AG04449 (cell line): ENCODE measurements at regions of chr17 and their contacts with region 1.

Region 1: GRCh38 chr17:29533976-29534375 is 32.9 kb downstream of the ABHD15 start:
- DNase-seq: no peak
- H3K4me3 ChIP-seq: no peak overlapping the region
- CTCF ChIP-seq: no peak

Region 2: GRCh38 chr17:29412780-29413565 is 121.0 kb before region 1 on chr17:
- CTCF ChIA-PET with region 1: no interaction called
- POLR2A ChIA-PET with region 1: no interaction called
- DNase-seq: peak; percentile 52
- H3K4me3 ChIP-seq: no peak overlapping the region
- CTCF ChIP-seq: no peak

Region 3: DNA sequence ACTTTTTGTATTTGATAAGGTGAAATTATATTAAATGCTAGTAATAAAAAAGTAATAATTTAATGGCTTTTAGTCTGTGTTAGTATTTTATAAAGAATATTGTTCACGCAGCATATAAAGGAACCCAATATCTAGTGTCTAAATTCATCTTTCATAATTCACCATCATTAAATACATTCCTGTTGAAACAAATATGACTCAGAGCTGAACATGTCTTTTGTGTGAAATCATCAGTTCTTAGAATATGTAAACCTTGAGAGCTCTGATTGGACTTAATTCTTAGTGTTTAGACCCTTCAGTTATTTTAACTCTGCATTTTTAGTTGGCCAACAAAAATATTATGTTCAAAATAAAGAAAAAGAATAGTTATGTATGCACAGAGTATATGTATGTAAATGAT is 39.0 kb before region 1 on chr17:
- CTCF ChIA-PET with region 1: interaction called, 13 read pairs
- POLR2A ChIA-PET with region 1: no interaction called
- DNase-seq: peak; percentile 17
- H3K4me3 ChIP-seq: no peak overlapping the region
- CTCF ChIP-seq: no peak

Region 4: GRCh38 chr17:29514792-29515191 is 19.2 kb before region 1 on chr17:
- CTCF ChIA-PET with region 1: interaction called, 64 read pairs
- POLR2A ChIA-PET with region 1: no interaction called
- DNase-seq: no peak
- H3K4me3 ChIP-seq: no peak overlapping the region
- CTCF ChIP-seq: no peak

Region 5: DNA sequence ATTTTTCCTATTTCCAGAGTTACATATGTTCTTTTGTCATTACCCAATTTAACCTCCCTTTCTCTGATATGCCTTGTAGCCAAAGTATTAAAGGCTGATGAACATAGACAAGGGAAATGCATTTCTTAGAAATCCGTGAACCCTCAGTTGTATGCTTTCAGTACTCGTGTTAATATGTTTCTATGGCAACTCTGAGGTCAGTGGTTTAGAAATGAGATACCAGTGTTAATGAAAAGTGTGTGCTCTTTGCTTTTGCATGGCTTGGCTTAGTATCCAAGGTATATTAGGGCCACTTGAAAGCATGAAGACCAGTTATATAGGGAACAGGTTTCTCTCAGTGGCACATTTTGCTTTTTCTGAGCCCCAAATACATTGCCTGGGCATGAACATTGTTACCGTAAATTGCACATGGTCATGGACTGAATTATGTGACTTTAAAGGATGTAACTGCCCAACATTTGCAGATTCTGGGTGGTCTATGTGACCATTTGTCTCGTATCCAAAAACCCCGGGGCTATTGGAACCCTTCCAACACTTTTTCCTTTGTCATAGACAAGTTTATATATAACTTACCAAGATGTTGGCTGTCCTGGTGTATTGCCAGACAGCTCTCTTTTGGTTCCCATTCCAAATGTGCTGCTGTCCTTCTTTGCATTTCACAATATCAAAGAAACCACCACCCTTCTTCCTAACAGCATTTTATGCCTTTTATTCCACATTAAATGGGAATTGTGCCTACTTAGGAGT is 15.4 kb after region 1 on chr17:
- CTCF ChIA-PET with region 1: interaction called, 20 read pairs
- POLR2A ChIA-PET with region 1: no interaction called
- DNase-seq: no peak
- H3K4me3 ChIP-seq: no peak overlapping the region
- CTCF ChIP-seq: no peak

Region 6: DNA sequence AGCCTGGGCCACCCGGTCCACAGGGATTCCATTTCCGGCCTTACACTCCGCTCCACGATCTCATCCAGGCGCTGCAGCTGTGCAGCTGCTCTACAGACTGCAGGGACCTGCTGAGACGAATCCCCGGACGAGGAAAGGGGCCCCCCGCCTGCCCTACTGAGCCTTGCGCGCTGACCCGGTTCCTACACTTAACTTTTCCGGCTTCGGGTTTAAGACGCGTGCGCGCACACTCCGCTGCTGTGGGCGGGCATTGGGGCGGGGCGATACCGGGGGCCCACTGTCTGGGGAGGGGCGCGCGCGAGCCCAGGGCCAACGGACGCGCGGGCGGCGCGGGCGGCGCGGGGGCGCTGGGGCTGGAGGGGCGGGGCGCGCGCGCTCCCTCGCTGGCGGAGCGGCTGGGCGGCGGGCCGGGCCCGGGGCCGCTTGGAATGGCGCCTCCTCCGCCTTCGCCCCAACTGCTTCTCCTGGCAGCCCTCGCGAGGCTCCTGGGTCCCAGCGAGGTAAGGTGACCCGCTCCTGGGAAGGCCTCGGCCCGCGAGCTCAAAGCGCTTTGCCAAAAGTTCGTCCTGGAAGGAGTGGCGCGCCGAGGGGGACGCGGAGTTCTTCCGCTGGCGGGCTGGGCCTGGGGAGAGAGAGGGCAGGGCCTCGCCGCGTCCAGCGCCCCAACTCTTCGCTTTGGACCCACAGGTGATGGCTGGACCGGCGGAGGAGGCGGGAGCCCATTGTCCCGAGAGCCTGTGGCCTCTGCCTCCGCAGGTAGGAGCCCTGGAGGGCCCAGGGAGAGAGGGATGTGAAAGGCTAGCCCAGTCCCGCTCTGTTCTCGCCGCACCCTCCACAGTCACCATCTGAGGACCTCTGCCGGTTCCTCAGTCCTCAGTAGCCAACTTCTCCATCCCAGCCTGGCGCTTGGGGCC is 34.6 kb after region 1 on chr17 and contains the start of gene TP53I13:
- CTCF ChIA-PET with region 1: interaction called, 11 read pairs
- POLR2A ChIA-PET with region 1: no interaction called
- DNase-seq: no peak
- H3K4me3 ChIP-seq: peak within 1 kb of the TSS; percentile 77
- CTCF ChIP-seq: no peak